Pancreas (tissue), 10 donors: ENCODE measurements at regions of chr12 and their contacts with region 1.

Region 1: GRCh38 chr12:39329018-39329417 is 113.9 kb downstream of the KIF21A start:
- DNase-seq: no peak
- ATAC-seq: no peak
- H3K4me3 ChIP-seq: no peak overlapping the region
- H3K27ac ChIP-seq: no peak overlapping the region
- H3K4me1 ChIP-seq: no peaks in the 10 kb centered on the region
- H3K27me3 ChIP-seq: no peaks in the 10 kb centered on the region
- CTCF ChIP-seq: no peak

Region 2: GRCh38 chr12:38977132-38977531 is 351.9 kb before region 1 on chr12:
- intact Hi-C with region 1: no loop called
- DNase-seq: no peak
- ATAC-seq: no peak
- H3K4me3 ChIP-seq: no peak overlapping the region
- H3K27ac ChIP-seq: no peak overlapping the region
- H3K4me1 ChIP-seq: no peaks in the 10 kb centered on the region
- H3K27me3 ChIP-seq: no peaks in the 10 kb centered on the region
- CTCF ChIP-seq: no peak

Region 3: DNA sequence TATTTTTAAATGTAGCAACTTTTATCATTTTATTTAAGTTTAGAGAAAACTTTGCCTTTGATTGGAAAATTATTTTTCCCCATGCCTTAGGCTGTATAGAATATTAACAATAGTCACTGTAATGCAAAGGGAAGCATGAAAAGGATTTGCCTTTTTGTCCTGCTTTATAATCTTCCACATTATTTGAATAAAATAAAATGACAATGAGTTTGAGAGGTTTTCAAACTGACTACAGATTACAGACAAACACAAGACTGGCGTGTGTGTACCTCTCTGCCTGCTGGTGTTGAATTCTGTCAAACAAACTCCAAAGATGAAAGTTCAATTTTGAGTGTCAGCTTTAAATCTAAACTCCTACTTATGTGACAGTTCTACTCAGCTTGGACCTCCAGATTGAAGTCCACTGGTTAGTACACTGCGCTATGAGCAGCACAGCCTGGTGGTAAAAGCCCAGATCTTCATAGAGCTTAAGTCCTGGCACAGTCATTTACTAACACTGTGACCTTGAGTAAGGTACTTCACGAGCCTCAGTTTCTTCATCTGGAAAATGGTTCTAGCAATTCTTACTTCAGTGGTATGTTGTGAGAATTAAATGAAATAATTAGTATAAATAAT is 325.4 kb before region 1 on chr12:
- intact Hi-C with region 1: no loop called
- DNase-seq: no peak
- ATAC-seq: no peak
- H3K4me3 ChIP-seq: no peak overlapping the region
- H3K27ac ChIP-seq: no peak overlapping the region
- H3K4me1 ChIP-seq: no peaks in the 10 kb centered on the region
- H3K27me3 ChIP-seq: no peaks in the 10 kb centered on the region
- CTCF ChIP-seq: no peak

Region 4: DNA sequence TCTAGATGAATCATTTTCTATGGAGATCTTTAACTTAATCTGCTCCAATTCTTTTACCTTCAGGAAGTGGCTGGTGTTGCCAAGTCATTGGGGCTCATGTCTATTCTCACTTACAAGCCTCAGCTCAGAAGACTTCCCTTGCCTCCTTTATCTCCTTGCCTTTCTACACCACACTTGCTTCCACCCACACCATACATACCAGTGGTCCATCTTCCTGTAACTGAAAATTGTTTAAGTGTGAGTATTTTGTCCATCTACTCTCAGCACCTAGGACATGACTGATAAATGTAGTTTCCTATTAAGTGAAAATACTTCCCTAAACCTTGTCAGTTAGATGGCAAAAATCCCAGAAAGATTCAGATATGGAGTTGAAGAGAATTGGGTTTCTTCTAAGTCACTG is 223.9 kb before region 1 on chr12:
- intact Hi-C with region 1: no loop called
- DNase-seq: no peak
- ATAC-seq: no peak
- H3K4me3 ChIP-seq: no peak overlapping the region
- H3K27ac ChIP-seq: no peak overlapping the region
- H3K4me1 ChIP-seq: peaks cover 0 to 4% (median 0%) of the 10 kb centered on the region in 3 donors
- H3K27me3 ChIP-seq: peaks cover 0 to 3% (median 0%) of the 10 kb centered on the region in 4 donors
- CTCF ChIP-seq: no peak

Region 5: GRCh38 chr12:39682689-39683477 is 353.9 kb after region 1 on chr12:
- intact Hi-C with region 1: loop called in 1 of 3 experiments (anchors 10 kb)
- DNase-seq: no peak
- ATAC-seq: no peak
- H3K4me3 ChIP-seq: no peak overlapping the region
- H3K27ac ChIP-seq: no peak overlapping the region
- H3K4me1 ChIP-seq: no peaks in the 10 kb centered on the region
- H3K27me3 ChIP-seq: no peaks in the 10 kb centered on the region
- CTCF ChIP-seq: no peak